CD8-positive, alpha-beta T cell (primary cell): ENCODE measurements at regions of chr20 and their contacts with region 1.

Region 1: GRCh38 chr20:59495894-59496510 is 108.3 kb upstream of the PHACTR3 start:
- DNase-seq: peak; percentile 41 to 80 (median 66)
- ATAC-seq: peak; percentile 36
- H3K4me3 ChIP-seq: no peak overlapping the region
- H3K4me3 Mint-ChIP-seq: no peak overlapping the region
- H3K27ac ChIP-seq: no peak overlapping the region
- H3K27ac Mint-ChIP-seq: no peak overlapping the region
- H3K4me1 ChIP-seq: no peaks in the 10 kb centered on the region
- H3K4me1 Mint-ChIP-seq: no peaks in the 10 kb centered on the region
- H3K27me3 ChIP-seq: peaks cover 0 to 2% of the 10 kb centered on the region in 2 experiments
- H3K27me3 Mint-ChIP-seq: peaks cover 21% of the 10 kb centered on the region
- CTCF ChIP-seq: peak; percentile 80

Region 2: GRCh38 chr20:58864350-58864749 is 631.7 kb before region 1 on chr20:
- CTCF ChIA-PET with region 1: interaction called, 18 read pairs
- POLR2A ChIA-PET with region 1: no interaction called
- intact Hi-C with region 1: loop called in 1 of 2 experiments (anchors 1 kb)
- DNase-seq: peak in 2 of 9 experiments; percentile 43 to 58
- ATAC-seq: peak; percentile 49
- H3K4me3 ChIP-seq: no peak overlapping the region
- H3K4me3 Mint-ChIP-seq: no peak overlapping the region
- H3K27ac ChIP-seq: no peak overlapping the region
- H3K27ac Mint-ChIP-seq: no peak overlapping the region
- H3K4me1 ChIP-seq: no peaks in the 10 kb centered on the region
- H3K4me1 Mint-ChIP-seq: no peaks in the 10 kb centered on the region
- H3K27me3 ChIP-seq: no peaks in the 10 kb centered on the region
- H3K27me3 Mint-ChIP-seq: peaks cover 18% of the 10 kb centered on the region
- CTCF ChIP-seq: peak; percentile 53

Region 3: GRCh38 chr20:58870239-58871014 is 625.6 kb before region 1 on chr20:
- CTCF ChIA-PET with region 1: interaction called, 18 read pairs
- POLR2A ChIA-PET with region 1: interaction called, 3 read pairs
- intact Hi-C with region 1: no loop called
- DNase-seq: peak in 7 of 9 experiments; percentile 27 to 75 (median 65)
- ATAC-seq: peak; percentile 81
- H3K4me3 ChIP-seq: no peak overlapping the region
- H3K4me3 Mint-ChIP-seq: no peak overlapping the region
- H3K27ac ChIP-seq: no peak overlapping the region
- H3K27ac Mint-ChIP-seq: no peak overlapping the region
- H3K4me1 ChIP-seq: no peaks in the 10 kb centered on the region
- H3K4me1 Mint-ChIP-seq: peaks cover 5% of the 10 kb centered on the region
- H3K27me3 ChIP-seq: no peaks in the 10 kb centered on the region
- H3K27me3 Mint-ChIP-seq: no peaks in the 10 kb centered on the region
- CTCF ChIP-seq: peak; percentile 73

Region 4: GRCh38 chr20:59055295-59055694 is 440.7 kb before region 1 on chr20:
- CTCF ChIA-PET with region 1: no interaction called
- POLR2A ChIA-PET with region 1: no interaction called
- intact Hi-C with region 1: loop called in 1 of 2 experiments (anchors 2 kb)
- DNase-seq: peak in 3 of 9 experiments; percentile 16 to 60 (median 49)
- ATAC-seq: no peak
- H3K4me3 ChIP-seq: no peak overlapping the region
- H3K4me3 Mint-ChIP-seq: no peak overlapping the region
- H3K27ac ChIP-seq: no peak overlapping the region
- H3K27ac Mint-ChIP-seq: no peak overlapping the region
- H3K4me1 ChIP-seq: no peaks in the 10 kb centered on the region
- H3K4me1 Mint-ChIP-seq: no peaks in the 10 kb centered on the region
- H3K27me3 ChIP-seq: peaks cover 0 to 4% of the 10 kb centered on the region in 2 experiments
- H3K27me3 Mint-ChIP-seq: peaks cover 33% of the 10 kb centered on the region
- CTCF ChIP-seq: peak; percentile 24

Region 5: GRCh38 chr20:59482351-59483187 is 13.4 kb before region 1 on chr20:
- CTCF ChIA-PET with region 1: interaction called, 16 read pairs
- POLR2A ChIA-PET with region 1: no interaction called
- intact Hi-C with region 1: no loop called
- DNase-seq: no peak
- ATAC-seq: no peak
- H3K4me3 ChIP-seq: no peak overlapping the region
- H3K4me3 Mint-ChIP-seq: no peak overlapping the region
- H3K27ac ChIP-seq: no peak overlapping the region
- H3K27ac Mint-ChIP-seq: no peak overlapping the region
- H3K4me1 ChIP-seq: no peaks in the 10 kb centered on the region
- H3K4me1 Mint-ChIP-seq: no peaks in the 10 kb centered on the region
- H3K27me3 ChIP-seq: peaks cover 0 to 3% of the 10 kb centered on the region in 2 experiments
- H3K27me3 Mint-ChIP-seq: peaks cover 30% of the 10 kb centered on the region
- CTCF ChIP-seq: no peak

Region 6: DNA sequence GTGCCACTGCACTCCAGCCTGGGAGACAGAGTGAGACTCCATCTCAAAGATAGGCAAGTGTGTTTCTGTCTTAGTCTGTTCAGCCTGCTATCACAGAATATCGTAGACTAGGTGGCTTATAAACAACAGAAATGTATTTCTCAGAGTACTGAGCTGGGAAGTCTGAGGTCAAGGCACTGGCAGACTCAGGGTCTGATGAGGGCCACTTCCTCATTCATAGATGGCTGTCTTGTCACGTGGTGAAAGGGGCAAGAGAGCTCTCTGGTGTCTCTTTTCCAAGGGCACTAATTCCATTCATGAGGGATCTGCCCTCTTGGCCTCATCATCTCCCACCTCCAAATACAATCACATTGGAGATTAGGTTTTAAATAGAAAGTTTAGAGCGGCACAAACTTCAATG is 12.7 kb after region 1 on chr20:
- CTCF ChIA-PET with region 1: interaction called, 25 read pairs
- POLR2A ChIA-PET with region 1: no interaction called
- intact Hi-C with region 1: no loop called
- DNase-seq: no peak
- ATAC-seq: no peak
- H3K4me3 ChIP-seq: no peak overlapping the region
- H3K4me3 Mint-ChIP-seq: no peak overlapping the region
- H3K27ac ChIP-seq: no peak overlapping the region
- H3K27ac Mint-ChIP-seq: no peak overlapping the region
- H3K4me1 ChIP-seq: no peaks in the 10 kb centered on the region
- H3K4me1 Mint-ChIP-seq: no peaks in the 10 kb centered on the region
- H3K27me3 ChIP-seq: no peaks in the 10 kb centered on the region
- H3K27me3 Mint-ChIP-seq: peaks cover 14% of the 10 kb centered on the region
- CTCF ChIP-seq: no peak

Region 7: DNA sequence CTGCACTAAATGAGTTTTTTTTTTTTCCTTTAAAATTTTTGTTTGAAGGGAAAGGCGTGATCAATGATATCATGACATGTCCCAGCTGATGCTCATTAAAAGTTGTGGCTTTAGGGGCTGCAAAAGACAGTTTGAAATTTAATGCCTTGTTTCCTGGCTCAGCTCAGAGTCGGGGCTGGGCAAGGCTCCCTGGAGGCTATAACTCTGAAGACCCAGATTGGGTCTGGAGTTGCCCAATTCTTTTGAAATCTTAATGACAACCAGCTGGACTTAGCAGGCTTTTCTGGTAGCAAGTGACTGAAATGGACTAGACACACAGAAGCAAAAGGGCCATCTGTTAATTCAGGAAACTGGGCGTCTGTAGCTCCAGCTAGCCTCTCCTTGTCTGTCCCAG is 84.5 kb after region 1 on chr20:
- CTCF ChIA-PET with region 1: no interaction called
- POLR2A ChIA-PET with region 1: no interaction called
- intact Hi-C with region 1: no loop called
- DNase-seq: no peak
- ATAC-seq: no peak
- H3K4me3 ChIP-seq: no peak overlapping the region
- H3K4me3 Mint-ChIP-seq: no peak overlapping the region
- H3K27ac ChIP-seq: no peak overlapping the region
- H3K27ac Mint-ChIP-seq: no peak overlapping the region
- H3K4me1 ChIP-seq: peaks cover 3% of the 10 kb centered on the region
- H3K4me1 Mint-ChIP-seq: peaks cover under 1% of the 10 kb centered on the region
- H3K27me3 ChIP-seq: peaks cover 0 to 2% of the 10 kb centered on the region in 2 experiments
- H3K27me3 Mint-ChIP-seq: peaks cover 37% of the 10 kb centered on the region
- CTCF ChIP-seq: no peak